ENCODE measurements at regions of chr22 and their contacts with region 1.

Region 1: DNA sequence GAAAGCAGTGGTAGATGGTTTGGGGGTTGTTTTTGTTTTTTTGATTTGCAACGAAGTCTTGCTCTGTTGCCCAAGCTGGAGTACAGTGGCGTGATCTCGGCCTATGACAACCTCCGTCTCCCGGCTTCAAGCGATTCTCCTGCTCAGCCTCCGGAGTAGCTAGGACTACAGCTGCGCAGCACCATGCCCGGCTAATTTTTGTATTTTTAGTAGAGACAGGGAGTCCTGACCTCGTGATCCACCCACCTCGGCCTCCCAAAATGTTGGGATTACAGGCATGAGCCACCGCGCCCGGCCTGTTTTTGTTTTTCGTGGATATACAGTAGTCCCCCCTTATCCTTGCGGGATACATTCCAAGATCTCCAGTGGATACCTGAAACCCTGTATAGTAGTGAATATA is 6.6 kb downstream of the EP300 start:
- DNase-seq: no peak
- H3K4me3 Mint-ChIP-seq: no peak overlapping the region
- H3K27ac Mint-ChIP-seq: no peak overlapping the region
- H3K4me1 Mint-ChIP-seq: peaks cover 49% of the 10 kb centered on the region
- H3K27me3 Mint-ChIP-seq: no peaks in the 10 kb centered on the region
- CTCF ChIP-seq: no peak

Region 2: GRCh38 chr22:41052661-41053490 is 46.2 kb before region 1 on chr22:
- CTCF ChIA-PET with region 1: no interaction called
- POLR2A ChIA-PET with region 1: no interaction called
- intact Hi-C with region 1: no loop called
- DNase-seq: no peak
- H3K4me3 Mint-ChIP-seq: no peak overlapping the region
- H3K27ac Mint-ChIP-seq: no peak overlapping the region
- H3K4me1 Mint-ChIP-seq: peaks cover under 1% of the 10 kb centered on the region
- H3K27me3 Mint-ChIP-seq: no peaks in the 10 kb centered on the region
- CTCF ChIP-seq: no peak

Region 3: DNA sequence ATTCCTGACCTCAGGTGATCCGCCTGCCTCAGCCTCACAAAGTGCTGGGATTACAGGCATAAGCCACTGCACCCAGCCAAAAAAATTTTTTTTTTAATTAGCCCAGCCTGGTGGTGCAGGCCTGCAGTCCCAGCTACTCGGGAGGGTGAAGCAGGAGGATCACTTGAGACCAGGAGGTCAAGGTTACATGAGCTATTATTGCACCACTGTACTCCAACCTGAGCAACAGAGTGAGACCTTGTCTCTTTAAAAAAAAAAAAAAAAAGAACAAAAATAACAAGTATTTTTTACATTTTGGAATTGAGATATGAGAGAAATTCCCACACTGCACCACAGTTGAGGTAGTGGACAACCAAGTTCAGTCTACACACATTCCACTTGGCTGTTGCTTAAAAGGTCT is 92.4 kb after region 1 on chr22:
- CTCF ChIA-PET with region 1: interaction called, 15 read pairs
- POLR2A ChIA-PET with region 1: interaction called, 200 read pairs
- intact Hi-C with region 1: loop called (anchors 10 kb)
- DNase-seq: no peak
- H3K4me3 Mint-ChIP-seq: no peak overlapping the region
- H3K27ac Mint-ChIP-seq: no peak overlapping the region
- H3K4me1 Mint-ChIP-seq: peaks cover 7% of the 10 kb centered on the region
- H3K27me3 Mint-ChIP-seq: no peaks in the 10 kb centered on the region
- CTCF ChIP-seq: no peak

Measured in MCF 10A (cell line).